ENCODE measurements at regions of chr4 and their contacts with region 1.

Region 1: GRCh38 chr4:81471588-81472288 is at the start of gene RASGEF1B:
- DNase-seq: peak; percentile 85 to 97 (median 94)
- ATAC-seq: peak; percentile 90 to 97 (median 93)
- H3K4me3 ChIP-seq: peak within 1 kb of the TSS; percentile 87 to 92
- H3K4me3 Mint-ChIP-seq: peak within 1 kb of the TSS; percentile 89 to 98 (median 97)
- H3K27ac ChIP-seq: peak within 1 kb of the TSS; percentile 99
- H3K27ac Mint-ChIP-seq: peak within 1 kb of the TSS; percentile 96 to 98
- H3K4me1 ChIP-seq: peaks cover 29 to 32% of the 10 kb centered on the region in 2 experiments
- H3K4me1 Mint-ChIP-seq: peaks cover 40 to 58% (median 43%) of the 10 kb centered on the region in 3 donors
- H3K27me3 ChIP-seq: peaks cover 0 to 7% of the 10 kb centered on the region in 2 experiments
- H3K27me3 Mint-ChIP-seq: no peaks in the 10 kb centered on the region
- total RNA-seq, gene RASGEF1B: 7.3 to 54.0 (median 8.1) TPM

Region 2: DNA sequence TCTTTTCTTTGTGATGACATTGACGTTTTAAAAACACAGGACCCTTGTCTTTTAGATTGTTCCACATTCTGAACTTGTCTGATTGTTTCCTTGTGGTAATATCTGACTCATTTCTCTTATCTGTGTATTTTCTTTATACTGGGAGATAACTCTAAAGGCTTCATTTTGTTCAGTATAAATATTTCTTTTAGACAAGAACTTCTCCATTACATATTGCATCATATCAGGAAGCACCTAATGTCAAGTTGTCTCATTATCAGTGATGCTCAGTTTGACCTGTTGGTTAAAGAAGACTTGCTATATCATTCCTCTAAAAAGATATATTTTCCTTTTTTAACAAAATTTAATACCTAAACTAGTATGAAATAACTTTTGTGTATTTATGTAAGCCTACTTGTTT is 593.5 kb before region 1 on chr4:
- CTCF ChIA-PET with region 1: no interaction called
- POLR2A ChIA-PET with region 1: no interaction called
- DNase-seq: no peak
- ATAC-seq: no peak
- H3K4me3 ChIP-seq: no peak overlapping the region
- H3K4me3 Mint-ChIP-seq: no peak overlapping the region
- H3K27ac ChIP-seq: no peak overlapping the region
- H3K27ac Mint-ChIP-seq: no peak overlapping the region
- H3K4me1 ChIP-seq: no peaks in the 10 kb centered on the region
- H3K4me1 Mint-ChIP-seq: peaks cover 0 to 5% (median 0%) of the 10 kb centered on the region in 3 donors
- H3K27me3 ChIP-seq: no peaks in the 10 kb centered on the region
- H3K27me3 Mint-ChIP-seq: peaks cover 0 to 11% of the 10 kb centered on the region in 2 donors

Region 3: DNA sequence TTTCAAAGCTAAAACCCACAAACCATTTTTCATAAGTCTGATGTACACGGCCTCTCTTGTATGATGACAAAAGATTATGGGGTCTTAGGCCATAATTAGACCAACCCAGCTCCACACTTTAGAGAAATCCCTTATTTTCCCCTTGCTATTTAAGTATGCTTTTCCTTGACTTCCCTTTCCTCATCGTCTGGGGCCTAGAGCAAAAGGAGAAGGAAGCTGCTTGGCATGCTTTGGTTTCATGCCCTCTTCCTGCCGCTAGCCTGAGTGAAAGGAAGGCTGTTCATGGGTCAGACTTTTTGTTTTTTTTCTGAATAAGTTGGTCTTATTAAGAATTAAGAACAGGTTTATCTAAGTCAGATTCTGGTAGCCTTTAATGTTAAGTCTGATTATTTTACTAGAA is 10.6 kb after region 1 on chr4:
- CTCF ChIA-PET with region 1: interaction called, 3 to 4 read pairs
- POLR2A ChIA-PET with region 1: interaction called in 1 of 2 experiments, 16 read pairs
- DNase-seq: no peak
- ATAC-seq: no peak
- H3K4me3 ChIP-seq: no peak overlapping the region
- H3K4me3 Mint-ChIP-seq: no peak overlapping the region
- H3K27ac ChIP-seq: no peak overlapping the region
- H3K27ac Mint-ChIP-seq: no peak overlapping the region
- H3K4me1 ChIP-seq: no peaks in the 10 kb centered on the region
- H3K4me1 Mint-ChIP-seq: peaks cover 0 to 5% (median 0%) of the 10 kb centered on the region in 3 donors
- H3K27me3 ChIP-seq: no peaks in the 10 kb centered on the region
- H3K27me3 Mint-ChIP-seq: no peaks in the 10 kb centered on the region

Region 4: DNA sequence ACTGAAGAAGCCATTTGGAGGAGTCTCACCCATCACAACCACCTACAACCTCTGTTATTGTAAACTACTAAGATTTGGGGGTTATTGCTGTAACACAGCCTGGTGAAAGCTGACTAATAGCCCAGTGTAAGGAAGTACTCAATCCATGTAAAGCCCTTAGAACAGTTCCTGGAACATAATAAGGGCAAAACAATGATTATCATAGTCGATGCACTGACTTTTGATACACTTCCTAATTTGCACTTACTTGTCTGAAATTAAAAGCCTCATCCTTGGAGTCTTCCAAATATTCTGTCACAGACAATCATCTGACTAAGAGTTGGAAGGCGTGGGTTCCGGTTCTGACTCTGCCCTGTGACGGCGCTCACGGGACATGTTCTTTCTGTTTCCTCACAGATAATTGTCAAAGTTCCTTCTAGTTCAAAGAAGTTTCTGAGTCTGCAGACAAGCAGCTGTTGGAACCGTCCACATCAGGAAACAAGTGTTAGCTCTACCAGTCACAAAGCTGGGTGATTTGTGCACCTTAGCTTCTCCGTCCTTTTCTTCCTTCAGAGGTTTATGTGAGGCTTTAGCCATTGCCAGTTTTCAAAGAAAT is 33.4 kb after region 1 on chr4:
- CTCF ChIA-PET with region 1: interaction called, 4 to 7 read pairs
- POLR2A ChIA-PET with region 1: interaction called, 3 to 19 read pairs
- DNase-seq: peak; percentile 20 to 76 (median 55)
- ATAC-seq: peak; percentile 87 to 95 (median 92)
- H3K4me3 ChIP-seq: peak overlapping the region in 1 of 2 donors; percentile 8
- H3K4me3 Mint-ChIP-seq: peak overlapping the region; percentile 53 to 59 (median 56)
- H3K27ac ChIP-seq: peak overlapping the region; percentile 67
- H3K27ac Mint-ChIP-seq: peak overlapping the region; percentile 82 to 88
- H3K4me1 ChIP-seq: peaks cover 20 to 26% of the 10 kb centered on the region in 2 experiments
- H3K4me1 Mint-ChIP-seq: peaks cover 24 to 45% (median 42%) of the 10 kb centered on the region in 3 donors
- H3K27me3 ChIP-seq: no peaks in the 10 kb centered on the region
- H3K27me3 Mint-ChIP-seq: no peaks in the 10 kb centered on the region

Region 5: GRCh38 chr4:81688085-81688484 is 216.3 kb after region 1 on chr4:
- CTCF ChIA-PET with region 1: interaction called, 11 to 20 read pairs
- POLR2A ChIA-PET with region 1: interaction called in 1 of 2 experiments, 6 read pairs
- DNase-seq: peak in 2 of 35 experiments; percentile 1 to 35
- ATAC-seq: peak in 1 of 4 experiments; percentile 51
- H3K4me3 ChIP-seq: no peak overlapping the region
- H3K4me3 Mint-ChIP-seq: no peak overlapping the region
- H3K27ac ChIP-seq: no peak overlapping the region
- H3K27ac Mint-ChIP-seq: no peak overlapping the region
- H3K4me1 ChIP-seq: no peaks in the 10 kb centered on the region
- H3K4me1 Mint-ChIP-seq: no peaks in the 10 kb centered on the region
- H3K27me3 ChIP-seq: no peaks in the 10 kb centered on the region
- H3K27me3 Mint-ChIP-seq: peaks cover 3 to 10% of the 10 kb centered on the region in 2 donors

Region 6: GRCh38 chr4:81923140-81923539 is 451.4 kb after region 1 on chr4:
- CTCF ChIA-PET with region 1: no interaction called
- POLR2A ChIA-PET with region 1: no interaction called
- DNase-seq: no peak
- ATAC-seq: no peak
- H3K4me3 ChIP-seq: no peak overlapping the region
- H3K4me3 Mint-ChIP-seq: no peak overlapping the region
- H3K27ac ChIP-seq: no peak overlapping the region
- H3K27ac Mint-ChIP-seq: no peak overlapping the region
- H3K4me1 ChIP-seq: no peaks in the 10 kb centered on the region
- H3K4me1 Mint-ChIP-seq: peaks cover 0 to 2% (median 0%) of the 10 kb centered on the region in 3 donors
- H3K27me3 ChIP-seq: peaks cover 0 to 5% of the 10 kb centered on the region in 2 experiments
- H3K27me3 Mint-ChIP-seq: peaks cover 14 to 23% of the 10 kb centered on the region in 2 donors

Region 7: GRCh38 chr4:82268050-82268825 is 796.5 kb after region 1 on chr4:
- CTCF ChIA-PET with region 1: interaction called, 6 to 11 read pairs
- POLR2A ChIA-PET with region 1: no interaction called
- DNase-seq: peak in 30 of 35 experiments; percentile 6 to 71 (median 30)
- ATAC-seq: peak; percentile 84 to 95 (median 88)
- H3K4me3 ChIP-seq: peak overlapping the region in 1 of 2 donors; percentile 18
- H3K4me3 Mint-ChIP-seq: peak overlapping the region in 1 of 3 donors; percentile 13
- H3K27ac ChIP-seq: no peak overlapping the region
- H3K27ac Mint-ChIP-seq: no peak overlapping the region
- H3K4me1 ChIP-seq: peaks cover 14 to 15% of the 10 kb centered on the region in 2 experiments
- H3K4me1 Mint-ChIP-seq: peaks cover 15 to 36% (median 21%) of the 10 kb centered on the region in 3 donors
- H3K27me3 ChIP-seq: peaks cover 0 to 14% of the 10 kb centered on the region in 2 experiments
- H3K27me3 Mint-ChIP-seq: peaks cover 5 to 9% of the 10 kb centered on the region in 2 donors

Region 8: DNA sequence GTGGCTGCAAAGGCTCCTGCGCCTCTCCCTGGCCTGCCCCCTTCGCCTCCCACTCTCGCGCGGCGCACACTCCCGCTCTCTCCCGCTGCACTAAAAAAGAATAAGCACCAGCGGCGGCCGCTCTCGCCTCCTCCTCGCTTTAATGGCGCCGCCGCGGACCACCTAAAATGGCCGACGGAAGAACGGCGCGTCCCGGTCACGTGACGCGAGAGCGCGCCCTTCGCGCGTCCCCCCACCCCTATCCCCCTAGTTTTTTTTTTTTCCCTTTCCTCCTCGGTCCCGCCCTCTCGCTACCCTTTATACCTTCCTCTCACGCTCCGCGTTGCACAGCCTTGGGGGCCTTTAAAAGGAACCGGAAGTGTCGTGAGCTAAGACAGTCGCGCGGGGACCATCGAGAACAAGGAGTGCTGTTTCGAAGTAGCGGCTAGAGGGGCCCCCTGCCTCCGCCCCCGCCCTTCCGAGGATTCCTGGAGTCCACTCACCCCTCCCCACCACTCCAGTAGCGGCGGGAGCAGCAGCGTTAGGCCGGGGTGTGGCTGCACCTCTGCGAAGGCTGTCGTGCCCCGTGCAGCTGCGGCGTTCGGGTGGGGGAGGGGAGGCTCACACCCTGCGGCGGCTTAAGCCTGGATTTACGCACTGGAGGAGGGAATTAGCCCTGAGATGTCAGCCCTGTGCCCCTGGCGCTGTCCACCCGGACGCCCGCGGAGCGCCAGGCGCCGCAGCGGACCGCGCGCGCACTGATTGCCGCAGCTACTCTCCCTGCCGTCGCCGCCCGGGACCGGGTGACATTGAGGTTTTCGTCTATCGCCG is 902.3 kb after region 1 on chr4 and contains the start of gene HNRNPD:
- CTCF ChIA-PET with region 1: interaction called in 1 of 2 experiments, 10 read pairs
- POLR2A ChIA-PET with region 1: no interaction called
- DNase-seq: peak; percentile 76 to 97 (median 89)
- ATAC-seq: peak; percentile 86 to 90 (median 88)
- H3K4me3 ChIP-seq: peak within 1 kb of the TSS; percentile 90 to 94
- H3K4me3 Mint-ChIP-seq: peak within 1 kb of the TSS; percentile 91 to 99 (median 97)
- H3K27ac ChIP-seq: peak within 1 kb of the TSS; percentile 97
- H3K27ac Mint-ChIP-seq: peak within 1 kb of the TSS; percentile 99
- H3K4me1 ChIP-seq: peaks cover 22 to 35% of the 10 kb centered on the region in 2 experiments
- H3K4me1 Mint-ChIP-seq: peaks cover 49 to 66% (median 49%) of the 10 kb centered on the region in 3 donors
- H3K27me3 ChIP-seq: no peaks in the 10 kb centered on the region
- H3K27me3 Mint-ChIP-seq: no peaks in the 10 kb centered on the region
- total RNA-seq, gene HNRNPD: 193 to 274 (median 202) TPM

Measured in T-cell (primary cell).